Caco-2 (cell line): ENCODE measurements at regions of chr2 and their contacts with region 1.

Region 1: DNA sequence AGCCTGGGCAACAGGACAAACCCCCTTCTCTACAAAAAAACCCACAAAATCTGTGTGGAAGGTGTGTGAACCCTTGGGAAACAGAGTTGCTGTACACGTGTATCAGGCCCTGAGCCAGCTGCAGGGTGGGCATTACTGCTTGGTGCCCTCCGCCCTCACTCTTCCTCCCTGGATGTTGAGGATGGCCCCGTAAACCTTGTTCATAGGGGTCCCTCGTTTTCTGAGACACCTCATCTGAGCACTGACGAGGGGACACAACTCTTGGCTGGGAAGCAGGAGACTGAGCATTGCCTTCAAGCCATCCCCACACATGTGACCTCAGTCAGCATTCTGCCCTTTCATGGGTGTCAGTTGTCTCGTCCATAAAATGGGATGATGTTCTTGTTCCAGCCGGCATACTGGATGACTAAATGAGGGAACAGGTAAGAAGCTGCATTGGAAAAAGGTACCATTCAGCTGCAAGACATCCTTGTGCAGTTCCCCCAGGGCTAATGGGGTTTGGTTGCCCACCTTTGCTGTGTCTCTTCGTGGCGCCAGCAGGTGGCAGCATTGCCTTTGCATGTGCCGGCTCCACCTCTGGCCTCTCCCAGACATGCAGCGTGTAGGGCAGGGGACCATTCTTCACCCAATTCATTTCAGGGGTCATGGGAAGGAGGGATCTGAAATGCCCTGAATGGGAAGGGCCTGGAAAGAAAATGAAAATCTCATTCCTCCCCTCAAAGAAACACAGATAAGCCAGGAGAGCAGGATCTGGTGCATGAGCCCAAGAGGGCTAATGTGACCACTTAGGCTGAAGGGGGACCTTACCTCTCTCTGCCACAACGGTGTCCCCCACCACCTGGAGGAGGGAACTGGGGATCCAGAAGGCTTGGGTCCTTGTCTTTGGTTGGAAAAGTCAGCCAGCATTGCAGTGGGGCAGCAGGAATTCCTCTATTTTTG is 36.4 kb upstream of the HAAO start:
- DNase-seq: peak; percentile 80 to 83
- H3K4me3 ChIP-seq: no peak overlapping the region
- H3K4me3 Mint-ChIP-seq: no peak overlapping the region
- H3K27ac Mint-ChIP-seq: no peak overlapping the region
- H3K4me1 ChIP-seq: peaks cover 7% of the 10 kb centered on the region; the same call in 1 of the 2 replicates
- H3K4me1 Mint-ChIP-seq: peaks cover 6% of the 10 kb centered on the region
- H3K27me3 ChIP-seq: no peaks in the 10 kb centered on the region
- H3K27me3 Mint-ChIP-seq: no peaks in the 10 kb centered on the region
- CTCF ChIP-seq: peak; percentile 92 to 93

Region 2: DNA sequence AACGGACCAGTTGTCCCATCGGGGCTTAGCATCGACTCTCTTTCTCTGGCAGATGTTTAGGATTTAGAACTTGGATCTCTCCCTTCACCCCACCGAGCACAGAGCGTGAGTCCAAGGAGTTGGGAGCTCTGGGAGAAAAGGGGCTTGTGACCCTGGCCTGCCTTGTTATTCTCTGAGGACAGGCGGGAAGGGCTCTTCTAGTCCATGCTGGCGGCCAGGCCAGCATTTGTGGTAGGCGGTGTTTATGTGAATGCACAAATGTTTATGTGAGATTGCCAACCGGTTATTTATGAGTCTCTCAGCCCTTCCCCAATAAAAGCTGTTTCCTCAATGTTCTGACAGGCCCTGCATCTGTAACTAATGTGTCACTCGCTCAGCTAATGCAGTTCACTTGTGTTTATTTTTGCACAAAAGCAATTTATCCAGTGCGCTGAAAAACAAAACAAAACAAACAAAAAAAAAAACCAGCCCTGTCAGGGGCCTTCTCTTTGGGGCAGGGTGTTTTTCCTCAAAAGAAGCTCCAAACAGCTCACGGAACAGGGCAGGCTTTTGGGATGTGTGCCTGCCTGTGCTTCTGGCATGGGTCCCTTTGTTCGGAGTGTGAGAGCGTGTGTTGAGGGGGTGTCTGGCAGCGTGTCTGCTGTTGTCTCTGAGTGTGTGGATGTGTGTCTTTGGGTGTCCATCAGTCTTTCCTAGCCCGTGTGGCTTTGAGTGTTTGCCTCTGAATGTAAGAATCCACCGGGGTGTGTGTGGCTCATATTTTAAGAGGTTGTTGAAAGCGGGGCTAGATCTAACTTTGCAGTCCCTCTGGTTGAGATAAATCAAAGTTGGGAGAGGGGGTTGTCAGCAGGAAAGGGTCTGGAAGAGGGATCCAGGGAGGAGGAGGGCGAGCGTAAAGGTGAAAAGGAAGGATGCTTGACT is 16.4 kb after region 1 on chr2:
- CTCF ChIA-PET with region 1: no interaction called
- POLR2A ChIA-PET with region 1: no interaction called
- intact Hi-C with region 1: no loop called
- DNase-seq: peak in 1 of 2 experiments; percentile 12
- H3K4me3 ChIP-seq: no peak overlapping the region
- H3K4me3 Mint-ChIP-seq: no peak overlapping the region
- H3K27ac Mint-ChIP-seq: no peak overlapping the region
- H3K4me1 ChIP-seq: peaks cover 5% of the 10 kb centered on the region; the same call in 1 of the 2 replicates
- H3K4me1 Mint-ChIP-seq: peaks cover 7% of the 10 kb centered on the region
- H3K27me3 ChIP-seq: no peaks in the 10 kb centered on the region
- H3K27me3 Mint-ChIP-seq: no peaks in the 10 kb centered on the region
- CTCF ChIP-seq: no peak

Region 3: DNA sequence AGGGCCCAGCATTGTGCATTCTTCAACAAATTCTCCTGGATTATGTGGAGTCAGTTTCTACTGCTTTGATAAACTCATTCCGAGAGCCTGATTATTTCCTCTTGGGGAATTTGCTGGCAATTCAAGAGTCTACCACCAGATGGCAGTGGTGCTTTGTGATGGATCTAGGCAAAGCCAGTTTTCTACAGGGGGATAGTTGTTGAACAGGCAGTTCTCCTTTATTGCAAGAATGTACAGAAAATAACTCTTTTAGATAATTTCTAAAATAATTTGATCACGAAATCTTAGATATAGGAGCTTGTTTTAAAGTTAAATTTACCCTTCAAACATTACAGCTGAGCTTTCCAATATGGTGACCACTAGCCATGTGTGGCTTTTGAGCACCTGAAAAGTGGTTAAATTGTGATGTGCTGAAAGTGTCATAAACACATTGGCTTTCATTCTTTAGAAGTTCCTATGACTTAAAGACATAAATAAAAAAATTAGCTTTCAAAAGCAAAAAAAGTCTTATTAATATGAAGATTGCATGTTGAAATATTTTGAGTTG is 30.3 kb after region 1 on chr2:
- CTCF ChIA-PET with region 1: interaction called, 3 read pairs
- POLR2A ChIA-PET with region 1: no interaction called
- intact Hi-C with region 1: loop called (anchors 1 kb)
- DNase-seq: peak; percentile 75 to 85
- H3K4me3 ChIP-seq: no peak overlapping the region
- H3K4me3 Mint-ChIP-seq: no peak overlapping the region
- H3K27ac Mint-ChIP-seq: no peak overlapping the region
- H3K4me1 ChIP-seq: peaks cover 12% of the 10 kb centered on the region; the same call in 1 of the 2 replicates
- H3K4me1 Mint-ChIP-seq: peaks cover 14% of the 10 kb centered on the region
- H3K27me3 ChIP-seq: no peaks in the 10 kb centered on the region
- H3K27me3 Mint-ChIP-seq: no peaks in the 10 kb centered on the region
- CTCF ChIP-seq: peak; percentile 89 to 94

Region 4: GRCh38 chr2:43005245-43005974 is 176.7 kb after region 1 on chr2:
- CTCF ChIA-PET with region 1: no interaction called
- POLR2A ChIA-PET with region 1: no interaction called
- intact Hi-C with region 1: no loop called
- DNase-seq: peak; percentile 75 to 93
- H3K4me3 ChIP-seq: peak overlapping the region; percentile 15; the same call in 1 of the 2 replicates
- H3K4me3 Mint-ChIP-seq: peak overlapping the region; percentile 14
- H3K27ac Mint-ChIP-seq: peak overlapping the region; percentile 84
- H3K4me1 ChIP-seq: peaks cover 43% of the 10 kb centered on the region
- H3K4me1 Mint-ChIP-seq: peaks cover 40% of the 10 kb centered on the region
- H3K27me3 ChIP-seq: no peaks in the 10 kb centered on the region
- H3K27me3 Mint-ChIP-seq: no peaks in the 10 kb centered on the region
- CTCF ChIP-seq: no peak

Region 5: DNA sequence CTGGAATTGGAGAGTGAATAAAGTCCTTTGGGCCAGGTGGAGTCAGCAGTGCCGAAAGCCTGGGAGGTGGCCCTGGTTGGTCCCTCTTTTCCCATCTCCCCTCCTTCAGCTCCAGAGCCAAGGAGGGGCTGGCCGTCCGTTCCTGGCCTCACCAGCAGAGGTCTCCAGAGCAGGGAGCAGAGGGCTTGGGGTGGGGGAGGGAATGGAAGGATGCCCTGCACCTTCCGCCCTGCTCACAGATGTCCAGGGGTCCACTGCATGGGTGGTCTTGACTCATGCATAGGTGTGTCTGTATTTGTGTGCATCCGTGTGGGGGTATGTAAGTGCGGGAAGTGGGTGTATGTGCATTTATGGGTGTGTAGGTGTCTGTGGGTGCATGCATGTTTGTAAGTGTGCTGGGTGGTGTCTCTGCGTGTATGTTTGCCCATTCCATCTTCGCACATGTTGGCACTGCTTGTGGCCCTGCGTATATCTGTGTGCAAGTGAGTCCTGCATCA is 195.8 kb after region 1 on chr2:
- CTCF ChIA-PET with region 1: no interaction called
- POLR2A ChIA-PET with region 1: no interaction called
- intact Hi-C with region 1: loop called (anchors 5 kb)
- DNase-seq: peak; percentile 77 to 82
- H3K4me3 ChIP-seq: no peak overlapping the region
- H3K4me3 Mint-ChIP-seq: no peak overlapping the region
- H3K27ac Mint-ChIP-seq: peak overlapping the region; percentile 36
- H3K4me1 ChIP-seq: peaks cover 38% of the 10 kb centered on the region
- H3K4me1 Mint-ChIP-seq: peaks cover 34% of the 10 kb centered on the region
- H3K27me3 ChIP-seq: no peaks in the 10 kb centered on the region
- H3K27me3 Mint-ChIP-seq: no peaks in the 10 kb centered on the region
- CTCF ChIP-seq: peak; percentile 77 to 92

Region 6: GRCh38 chr2:43484323-43484930 is 655.7 kb after region 1 on chr2:
- CTCF ChIA-PET with region 1: interaction called, 5 read pairs
- POLR2A ChIA-PET with region 1: no interaction called
- intact Hi-C with region 1: loop called (anchors 1 kb)
- DNase-seq: peak in 1 of 2 experiments; percentile 57
- H3K4me3 ChIP-seq: no peak overlapping the region
- H3K4me3 Mint-ChIP-seq: no peak overlapping the region
- H3K27ac Mint-ChIP-seq: no peak overlapping the region
- H3K4me1 ChIP-seq: peaks cover 14% of the 10 kb centered on the region
- H3K4me1 Mint-ChIP-seq: peaks cover 34% of the 10 kb centered on the region
- H3K27me3 ChIP-seq: no peaks in the 10 kb centered on the region
- H3K27me3 Mint-ChIP-seq: no peaks in the 10 kb centered on the region
- CTCF ChIP-seq: peak; percentile 28 to 80

Region 7: GRCh38 chr2:43576981-43577892 is 748.5 kb after region 1 on chr2:
- CTCF ChIA-PET with region 1: interaction called, 4 read pairs
- POLR2A ChIA-PET with region 1: no interaction called
- intact Hi-C with region 1: loop called (anchors 1 kb)
- DNase-seq: peak in 1 of 2 experiments; percentile 35
- H3K4me3 ChIP-seq: no peak overlapping the region
- H3K4me3 Mint-ChIP-seq: no peak overlapping the region
- H3K27ac Mint-ChIP-seq: no peak overlapping the region
- H3K4me1 ChIP-seq: no peaks in the 10 kb centered on the region
- H3K4me1 Mint-ChIP-seq: no peaks in the 10 kb centered on the region
- H3K27me3 ChIP-seq: no peaks in the 10 kb centered on the region
- H3K27me3 Mint-ChIP-seq: no peaks in the 10 kb centered on the region
- CTCF ChIP-seq: peak; percentile 78 to 82